T-cell (primary cell): ENCODE measurements at regions of chr6 and their contacts with region 1.

Region 1: GRCh38 chr6:116975600-116975999 is 98.6 kb downstream of the RFX6 start:
- DNase-seq: no peak
- ATAC-seq: no peak
- H3K4me3 ChIP-seq: no peak overlapping the region
- H3K4me3 Mint-ChIP-seq: no peak overlapping the region
- H3K27ac ChIP-seq: no peak overlapping the region
- H3K27ac Mint-ChIP-seq: no peak overlapping the region
- H3K4me1 ChIP-seq: no peaks in the 10 kb centered on the region
- H3K4me1 Mint-ChIP-seq: no peaks in the 10 kb centered on the region
- H3K27me3 ChIP-seq: no peaks in the 10 kb centered on the region
- H3K27me3 Mint-ChIP-seq: no peaks in the 10 kb centered on the region

Region 2: DNA sequence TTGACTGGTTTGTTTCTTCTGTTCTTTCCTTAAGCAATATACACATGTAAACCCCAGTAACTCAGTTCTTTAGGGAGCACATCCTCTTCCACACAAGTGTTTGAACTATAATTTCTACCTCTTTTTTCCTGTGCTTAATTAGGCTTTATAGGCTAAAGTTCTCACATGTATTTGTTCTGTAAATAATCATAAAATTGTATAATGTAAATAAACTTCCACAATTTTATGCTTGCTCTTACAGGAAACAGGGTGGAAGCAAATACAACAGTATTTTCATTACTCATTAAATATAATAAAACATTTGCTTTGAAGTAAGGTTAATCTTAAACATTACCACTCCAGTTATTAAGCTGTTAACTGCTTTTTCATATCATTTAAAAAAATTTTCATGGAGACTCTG is 173.6 kb before region 1 on chr6:
- CTCF ChIA-PET with region 1: no interaction called
- POLR2A ChIA-PET with region 1: no interaction called
- DNase-seq: no peak
- ATAC-seq: no peak
- H3K4me3 ChIP-seq: no peak overlapping the region
- H3K4me3 Mint-ChIP-seq: no peak overlapping the region
- H3K27ac ChIP-seq: no peak overlapping the region
- H3K27ac Mint-ChIP-seq: no peak overlapping the region
- H3K4me1 ChIP-seq: no peaks in the 10 kb centered on the region
- H3K4me1 Mint-ChIP-seq: no peaks in the 10 kb centered on the region
- H3K27me3 ChIP-seq: no peaks in the 10 kb centered on the region
- H3K27me3 Mint-ChIP-seq: peaks cover 17 to 25% of the 10 kb centered on the region in 2 donors

Region 3: DNA sequence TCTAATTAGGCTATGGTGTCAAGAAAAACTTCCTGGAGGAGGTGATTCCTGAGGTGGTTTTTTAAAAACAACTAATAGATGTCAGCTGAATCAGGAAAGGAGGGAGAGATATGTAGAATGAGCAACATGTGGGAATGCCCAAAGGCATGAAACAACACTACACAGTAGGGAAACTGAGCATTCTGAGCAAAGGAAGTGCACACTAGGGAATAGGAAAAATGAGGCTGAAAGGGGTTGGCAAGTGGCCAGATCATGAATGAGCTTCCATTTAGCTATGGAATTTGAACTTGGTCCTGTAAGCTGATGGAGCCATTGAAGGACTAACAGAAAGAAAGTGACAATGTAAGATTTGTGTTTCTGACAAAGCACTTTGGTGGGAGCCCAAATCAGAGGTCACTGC is 914.6 kb after region 1 on chr6:
- CTCF ChIA-PET with region 1: no interaction called
- POLR2A ChIA-PET with region 1: interaction called in 1 of 2 experiments, 13 read pairs
- DNase-seq: no peak
- ATAC-seq: no peak
- H3K4me3 ChIP-seq: no peak overlapping the region
- H3K4me3 Mint-ChIP-seq: no peak overlapping the region
- H3K27ac ChIP-seq: no peak overlapping the region
- H3K27ac Mint-ChIP-seq: no peak overlapping the region
- H3K4me1 ChIP-seq: no peaks in the 10 kb centered on the region
- H3K4me1 Mint-ChIP-seq: no peaks in the 10 kb centered on the region
- H3K27me3 ChIP-seq: peaks cover 0 to 2% of the 10 kb centered on the region in 2 experiments
- H3K27me3 Mint-ChIP-seq: peaks cover 3 to 10% of the 10 kb centered on the region in 2 donors